ENCODE measurements at regions of chr3 and their contacts with region 1.

Region 1: DNA sequence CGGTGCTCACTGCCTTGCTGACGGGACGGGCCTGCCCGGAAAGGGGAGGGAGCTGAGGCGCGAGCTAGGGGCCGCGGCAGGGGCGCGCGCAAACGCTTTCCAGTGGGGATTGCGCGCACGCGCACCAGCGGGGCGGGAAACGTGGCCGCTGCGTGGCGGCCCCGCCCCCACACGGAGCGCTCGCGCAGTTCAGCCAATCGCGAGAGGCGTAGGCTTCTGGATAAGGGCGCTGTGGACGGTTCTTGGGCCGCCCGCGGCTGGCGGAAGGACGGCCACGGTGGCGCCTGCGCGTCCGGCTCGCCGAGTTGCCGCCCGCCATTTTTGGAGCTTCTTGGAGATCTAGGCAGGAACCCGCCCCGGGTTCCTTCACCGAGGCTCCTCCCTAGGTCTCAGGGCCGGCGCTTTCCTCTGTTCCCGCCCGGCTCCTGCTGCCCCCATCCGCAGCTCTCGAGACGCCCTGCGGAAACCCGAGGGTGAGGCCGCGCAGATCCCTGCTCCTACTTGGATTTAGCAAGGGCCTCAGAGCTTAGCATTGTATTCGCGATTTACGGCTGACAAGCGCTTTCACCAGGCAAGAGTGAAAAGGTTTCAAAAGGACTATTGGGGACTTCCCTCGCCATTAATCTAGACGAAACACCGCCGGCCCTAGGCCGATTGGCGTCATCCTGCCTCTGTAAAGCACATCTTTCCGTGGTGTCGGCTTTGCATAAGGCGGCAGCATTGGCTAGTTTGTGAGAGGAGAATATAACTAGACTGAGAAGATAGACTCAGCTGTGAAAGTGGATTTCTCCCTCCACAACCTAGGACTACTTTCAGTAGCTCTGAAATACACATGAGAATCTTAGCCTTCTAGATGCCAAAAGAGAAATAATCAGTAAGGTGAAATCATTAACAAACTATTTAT is 496 bp upstream of the STAG1 start:
- DNase-seq: peak; percentile 99
- H3K4me3 Mint-ChIP-seq: peak overlapping the region; percentile 76
- H3K27ac Mint-ChIP-seq: peak overlapping the region; percentile 94
- H3K4me1 Mint-ChIP-seq: peaks cover 41% of the 10 kb centered on the region
- H3K27me3 Mint-ChIP-seq: peaks cover 4% of the 10 kb centered on the region

Region 2: GRCh38 chr3:136196401-136197158 is 556.1 kb before region 1 on chr3:
- CTCF ChIA-PET with region 1: interaction called, 12 read pairs
- DNase-seq: peak; percentile 99
- H3K4me3 Mint-ChIP-seq: peak overlapping the region; percentile 99
- H3K27ac Mint-ChIP-seq: peak overlapping the region; percentile 96
- H3K4me1 Mint-ChIP-seq: peaks cover 26% of the 10 kb centered on the region
- H3K27me3 Mint-ChIP-seq: peaks cover 10% of the 10 kb centered on the region

Region 3: GRCh38 chr3:136390574-136390973 is 362.1 kb before region 1 on chr3:
- CTCF ChIA-PET with region 1: interaction called, 49 read pairs
- DNase-seq: no peak
- H3K4me3 Mint-ChIP-seq: no peak overlapping the region
- H3K27ac Mint-ChIP-seq: no peak overlapping the region
- H3K4me1 Mint-ChIP-seq: peaks cover 4% of the 10 kb centered on the region
- H3K27me3 Mint-ChIP-seq: no peaks in the 10 kb centered on the region

Region 4: GRCh38 chr3:136861890-136862616 is 109.4 kb after region 1 on chr3 and contains the start of gene NCK1:
- CTCF ChIA-PET with region 1: interaction called, 24 read pairs
- DNase-seq: peak; percentile 99
- H3K4me3 Mint-ChIP-seq: peak within 1 kb of the TSS; percentile 85
- H3K27ac Mint-ChIP-seq: peak within 1 kb of the TSS; percentile 99
- H3K4me1 Mint-ChIP-seq: peaks cover 60% of the 10 kb centered on the region
- H3K27me3 Mint-ChIP-seq: peaks cover 3% of the 10 kb centered on the region